ENCODE measurements at regions of chr1 and their contacts with region 1.

Region 1: GRCh38 chr1:42931108-42931539 is 27.5 kb downstream of the SLC2A1 start:
- DNase-seq: peak; percentile 69
- H3K4me3 Mint-ChIP-seq: peak overlapping the region; percentile 74
- H3K27ac Mint-ChIP-seq: peak overlapping the region; percentile 94
- H3K4me1 Mint-ChIP-seq: peaks cover 97% of the 10 kb centered on the region
- H3K27me3 Mint-ChIP-seq: no peaks in the 10 kb centered on the region

Region 2: GRCh38 chr1:42941640-42942330 is 10.7 kb after region 1 on chr1:
- CTCF ChIA-PET with region 1: interaction called, 5 read pairs
- POLR2A ChIA-PET with region 1: interaction called, 61 read pairs
- DNase-seq: peak; percentile 59
- H3K4me3 Mint-ChIP-seq: peak overlapping the region; percentile 50
- H3K27ac Mint-ChIP-seq: peak overlapping the region; percentile 94
- H3K4me1 Mint-ChIP-seq: peaks cover 99% of the 10 kb centered on the region
- H3K27me3 Mint-ChIP-seq: no peaks in the 10 kb centered on the region

Region 3: GRCh38 chr1:42952303-42953001 is 21.3 kb after region 1 on chr1:
- CTCF ChIA-PET with region 1: interaction called, 12 read pairs
- POLR2A ChIA-PET with region 1: interaction called, 387 read pairs
- DNase-seq: peak; percentile 57
- H3K4me3 Mint-ChIP-seq: peak overlapping the region; percentile 40
- H3K27ac Mint-ChIP-seq: peak overlapping the region; percentile 87
- H3K4me1 Mint-ChIP-seq: peaks cover 86% of the 10 kb centered on the region
- H3K27me3 Mint-ChIP-seq: no peaks in the 10 kb centered on the region

Region 4: DNA sequence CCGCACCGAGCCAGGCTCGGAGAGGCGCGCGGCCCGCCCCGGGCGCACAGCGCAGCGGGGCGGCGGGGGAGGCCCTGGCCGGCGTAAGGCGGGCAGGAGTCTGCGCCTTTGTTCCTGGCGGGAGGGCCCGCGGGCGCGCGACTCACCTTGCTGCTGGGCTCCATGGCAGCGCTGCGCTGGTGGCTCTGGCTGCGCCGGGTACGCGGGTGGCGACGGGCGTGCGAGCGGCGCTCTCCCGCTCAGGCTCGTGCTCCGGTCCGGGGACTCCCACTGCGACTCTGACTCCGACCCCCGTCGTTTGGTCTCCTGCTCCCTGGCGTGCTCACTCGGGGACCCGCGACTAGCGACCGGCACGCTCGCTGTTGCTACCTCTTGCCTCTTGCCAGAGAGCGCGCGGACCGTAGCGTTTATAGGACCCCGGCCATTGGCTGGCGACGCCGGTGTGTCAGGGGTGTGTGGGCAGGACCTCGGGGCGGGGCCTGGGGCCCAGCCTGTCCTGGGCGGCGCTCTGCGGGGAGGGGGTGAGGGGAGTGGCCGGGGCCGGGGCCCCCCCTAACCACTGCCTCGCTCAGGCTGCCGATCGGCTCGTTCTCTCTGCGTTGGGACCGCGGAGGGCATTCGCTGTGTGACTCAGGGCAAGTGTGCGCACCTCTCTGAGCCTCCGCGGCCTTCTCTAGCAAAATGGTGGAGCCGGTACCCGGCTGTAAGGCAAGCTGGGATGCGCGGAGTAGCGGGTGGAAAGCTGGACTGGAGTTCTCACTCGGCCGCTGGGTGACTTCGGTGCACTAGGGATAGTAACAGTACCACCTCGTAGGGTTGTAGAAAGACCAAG is 27.6 kb after region 1 on chr1 and contains the start of gene SLC2A1:
- CTCF ChIA-PET with region 1: interaction called, 12 read pairs
- POLR2A ChIA-PET with region 1: interaction called, 387 read pairs
- DNase-seq: peak; percentile 96
- H3K4me3 Mint-ChIP-seq: peak within 1 kb of the TSS; percentile 99
- H3K27ac Mint-ChIP-seq: peak within 1 kb of the TSS; percentile 100
- H3K4me1 Mint-ChIP-seq: peaks cover 63% of the 10 kb centered on the region
- H3K27me3 Mint-ChIP-seq: peaks cover 12% of the 10 kb centered on the region
- total RNA-seq, gene SLC2A1: 153 TPM